Activated naive CD4-positive, alpha-beta T cell treated with anti-CD3 and anti-CD28 coated beads for 36 hours (primary cell): ENCODE measurements at regions of chr12 and their contacts with region 1.

Region 1: DNA sequence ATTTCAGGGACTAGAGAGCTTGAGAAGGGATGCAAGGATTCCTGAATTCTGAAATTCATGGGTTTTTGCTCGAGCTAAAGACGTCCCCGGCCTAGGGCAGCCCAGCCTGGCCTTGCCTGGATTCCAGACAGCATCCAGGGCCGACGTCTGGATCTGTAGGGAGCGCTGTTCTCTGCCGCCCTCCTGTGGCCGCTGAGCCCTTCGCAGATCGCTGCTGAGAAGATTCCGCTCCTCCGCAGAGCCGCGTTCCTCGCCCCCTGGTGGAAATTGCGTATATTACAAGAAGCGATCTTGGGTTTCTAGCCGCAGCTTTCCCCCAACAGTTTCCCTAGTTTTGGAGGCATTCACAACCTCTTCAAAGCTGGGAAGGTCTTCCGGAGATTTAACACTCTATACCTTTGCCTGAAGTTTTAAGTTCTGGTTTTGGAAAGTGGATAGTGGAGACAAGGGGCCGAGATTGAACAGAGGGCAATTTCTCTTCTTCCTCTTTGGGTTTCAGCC is 5.1 kb downstream of the CISTR start:
- DNase-seq: peak; percentile 94
- H3K4me3 Mint-ChIP-seq: no peak overlapping the region
- H3K27ac Mint-ChIP-seq: no peak overlapping the region
- H3K4me1 Mint-ChIP-seq: peaks cover 5% of the 10 kb centered on the region
- H3K27me3 Mint-ChIP-seq: peaks cover 20% of the 10 kb centered on the region

Region 2: DNA sequence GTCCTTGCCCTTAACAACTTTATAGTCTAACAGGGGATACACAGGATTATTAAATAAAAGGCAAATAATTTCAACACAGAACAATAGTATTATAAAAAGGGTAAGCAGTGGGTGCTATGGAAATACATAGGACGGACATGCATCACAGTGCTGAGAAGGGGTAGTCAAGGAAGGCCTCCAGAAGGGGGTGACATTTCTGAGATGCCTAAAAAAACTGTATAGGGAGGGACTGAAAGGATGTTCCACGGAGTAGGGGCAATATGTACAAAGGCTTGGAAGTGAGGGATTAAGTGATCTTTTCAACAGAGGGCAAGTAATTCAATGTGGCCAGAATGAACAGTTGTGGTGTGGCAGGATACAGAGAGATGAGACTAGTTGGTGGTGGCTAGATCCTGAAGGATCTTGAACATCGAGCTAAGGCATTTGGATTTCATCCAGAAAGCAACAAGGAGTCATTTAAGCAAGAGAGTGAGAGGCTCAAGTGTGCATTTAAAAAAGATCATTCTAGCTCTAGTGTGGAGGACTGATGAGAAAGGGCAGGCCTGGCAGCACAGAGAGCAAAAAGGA is 61.9 kb before region 1 on chr12:
- CTCF ChIA-PET with region 1: interaction called, 13 read pairs
- intact Hi-C with region 1: no loop called
- DNase-seq: no peak
- H3K4me3 Mint-ChIP-seq: no peak overlapping the region
- H3K27ac Mint-ChIP-seq: no peak overlapping the region
- H3K4me1 Mint-ChIP-seq: no peaks in the 10 kb centered on the region
- H3K27me3 Mint-ChIP-seq: no peaks in the 10 kb centered on the region

Region 3: DNA sequence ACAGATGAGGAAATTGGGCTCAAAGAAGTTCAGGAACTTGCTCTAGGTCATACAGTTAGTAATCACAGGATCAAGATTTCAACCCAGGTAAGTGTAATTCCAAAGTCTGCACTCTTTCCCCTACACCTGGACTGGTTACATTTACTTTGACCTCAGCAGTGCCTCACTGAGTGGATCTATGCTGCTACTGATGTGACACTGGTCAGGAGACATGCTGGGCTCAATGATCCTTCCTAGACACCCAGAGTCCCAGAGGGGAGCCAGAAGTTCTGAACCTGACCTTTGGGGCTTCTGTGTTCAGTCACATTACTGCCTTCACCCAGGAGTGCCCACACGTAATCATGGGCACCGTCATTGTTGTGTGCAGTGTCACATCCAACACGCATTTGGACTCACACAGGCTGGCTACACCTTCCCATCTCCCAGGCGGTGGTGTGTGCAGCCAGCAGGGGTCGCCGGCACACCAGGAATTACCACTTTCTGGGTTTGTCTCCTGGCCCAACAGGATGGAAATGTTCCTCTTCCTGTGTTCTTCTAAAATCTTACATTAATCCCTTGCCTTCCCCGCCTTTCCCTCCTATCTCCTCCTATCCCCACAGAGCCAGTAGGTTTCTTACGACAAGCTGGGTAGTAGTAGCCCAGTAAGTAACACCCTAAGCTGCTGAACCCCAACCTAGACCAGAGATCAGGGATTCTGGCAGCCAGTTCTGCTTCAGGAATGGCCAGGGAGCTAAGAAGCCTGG is 45.0 kb before region 1 on chr12:
- CTCF ChIA-PET with region 1: interaction called, 236 read pairs
- intact Hi-C with region 1: loop called (anchors 1 kb)
- DNase-seq: peak; percentile 86
- H3K4me3 Mint-ChIP-seq: no peak overlapping the region
- H3K27ac Mint-ChIP-seq: no peak overlapping the region
- H3K4me1 Mint-ChIP-seq: peaks cover 7% of the 10 kb centered on the region
- H3K27me3 Mint-ChIP-seq: peaks cover 74% of the 10 kb centered on the region

Region 4: DNA sequence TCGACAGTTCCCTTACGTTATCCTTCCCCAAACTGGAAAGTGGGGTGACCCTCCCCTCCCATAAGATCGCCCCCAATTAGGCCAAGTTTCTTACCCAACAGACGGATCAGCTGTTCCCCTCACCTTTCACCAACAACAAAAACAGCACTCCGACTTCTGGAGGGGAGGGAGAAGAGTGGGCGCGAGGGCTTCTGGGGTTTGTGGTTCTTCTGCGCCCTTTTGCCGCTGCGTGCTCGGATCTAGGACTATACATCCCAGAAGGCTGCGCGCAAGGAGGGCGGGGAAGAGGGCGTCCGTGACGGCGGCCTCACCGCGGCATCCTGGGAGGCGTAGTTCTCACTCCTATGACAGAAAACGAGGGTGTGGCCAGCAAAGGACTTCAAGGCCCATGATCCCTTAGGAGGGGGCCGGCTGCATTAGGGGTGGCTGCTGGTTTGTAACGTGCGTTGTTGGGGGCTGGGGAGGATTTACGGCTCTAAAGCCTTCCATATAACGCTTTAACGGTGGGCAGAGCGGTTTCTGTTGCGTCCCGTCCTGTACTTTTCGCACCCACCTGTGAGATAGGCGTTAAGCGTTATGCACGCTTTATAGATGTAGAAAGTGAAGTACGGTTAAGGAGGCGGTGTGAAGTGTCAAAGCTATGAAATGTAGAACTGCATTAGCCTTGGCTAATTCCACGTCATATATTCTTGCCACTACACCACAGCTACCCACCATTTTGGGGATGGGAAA is 19.2 kb before region 1 on chr12 and contains the start of gene CALCOCO1:
- CTCF ChIA-PET with region 1: interaction called, 231 read pairs
- intact Hi-C with region 1: loop called (anchors 1 kb)
- DNase-seq: peak; percentile 99
- H3K4me3 Mint-ChIP-seq: peak within 1 kb of the TSS; percentile 92
- H3K27ac Mint-ChIP-seq: peak within 1 kb of the TSS; percentile 87
- H3K4me1 Mint-ChIP-seq: peaks cover 16% of the 10 kb centered on the region
- H3K27me3 Mint-ChIP-seq: no peaks in the 10 kb centered on the region
- total RNA-seq, gene CALCOCO1: 8.1 to 8.3 TPM

Region 5: GRCh38 chr12:53764615-53765014 is 18.0 kb after region 1 on chr12:
- CTCF ChIA-PET with region 1: interaction called, 13 read pairs
- intact Hi-C with region 1: no loop called
- DNase-seq: no peak
- H3K4me3 Mint-ChIP-seq: no peak overlapping the region
- H3K27ac Mint-ChIP-seq: no peak overlapping the region
- H3K4me1 Mint-ChIP-seq: no peaks in the 10 kb centered on the region
- H3K27me3 Mint-ChIP-seq: peaks cover 44% of the 10 kb centered on the region

Region 6: GRCh38 chr12:53791735-53792326 is 45.2 kb after region 1 on chr12:
- CTCF ChIA-PET with region 1: no interaction called
- intact Hi-C with region 1: no loop called
- DNase-seq: peak; percentile 42
- H3K4me3 Mint-ChIP-seq: no peak overlapping the region
- H3K27ac Mint-ChIP-seq: no peak overlapping the region
- H3K4me1 Mint-ChIP-seq: no peaks in the 10 kb centered on the region
- H3K27me3 Mint-ChIP-seq: peaks cover 3% of the 10 kb centered on the region

Region 7: DNA sequence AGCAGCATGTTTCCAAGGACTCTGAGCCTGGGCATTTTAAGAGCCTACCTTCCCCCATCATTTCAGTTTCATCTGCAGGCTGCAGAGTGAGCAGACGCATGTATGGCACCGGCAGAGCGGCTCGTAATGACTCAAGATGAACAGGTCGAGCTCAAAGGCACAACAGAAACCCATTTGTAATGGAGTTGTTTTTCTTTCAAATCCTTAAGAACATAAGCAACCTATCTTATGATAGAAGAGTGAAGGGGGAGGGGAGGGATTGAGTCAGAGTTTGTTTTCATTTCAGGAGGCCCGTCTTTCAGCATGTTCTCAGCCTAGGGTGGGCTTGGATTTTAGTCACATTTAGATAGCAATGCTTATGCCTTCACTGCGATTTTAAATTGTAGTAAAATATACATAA is 60.1 kb after region 1 on chr12:
- CTCF ChIA-PET with region 1: no interaction called
- intact Hi-C with region 1: no loop called
- DNase-seq: no peak
- H3K4me3 Mint-ChIP-seq: no peak overlapping the region
- H3K27ac Mint-ChIP-seq: no peak overlapping the region
- H3K4me1 Mint-ChIP-seq: no peaks in the 10 kb centered on the region
- H3K27me3 Mint-ChIP-seq: peaks cover 24% of the 10 kb centered on the region

Region 8: GRCh38 chr12:53852061-53852460 is 105.4 kb after region 1 on chr12:
- CTCF ChIA-PET with region 1: no interaction called
- intact Hi-C with region 1: no loop called
- DNase-seq: no peak
- H3K4me3 Mint-ChIP-seq: no peak overlapping the region
- H3K27ac Mint-ChIP-seq: no peak overlapping the region
- H3K4me1 Mint-ChIP-seq: no peaks in the 10 kb centered on the region
- H3K27me3 Mint-ChIP-seq: peaks cover 25% of the 10 kb centered on the region

Region 9: DNA sequence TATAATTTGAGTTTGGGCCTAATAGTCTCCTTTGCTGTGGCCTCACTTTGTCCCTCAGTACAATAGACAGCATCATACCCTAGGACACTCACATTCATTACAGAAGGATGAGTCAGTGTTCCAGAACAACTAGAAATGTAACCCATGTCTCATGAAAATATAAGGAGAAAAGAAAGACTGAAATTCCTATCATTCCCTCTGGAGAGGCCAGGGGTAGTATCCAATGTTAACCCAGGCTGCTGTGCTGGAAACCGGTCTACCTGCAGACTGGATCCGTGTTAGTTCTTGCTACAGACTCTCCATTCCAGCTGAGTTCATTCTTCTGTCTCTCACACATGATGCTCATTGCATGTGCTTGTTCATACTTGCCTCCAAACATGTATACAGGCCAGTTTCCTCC is 116.2 kb after region 1 on chr12:
- CTCF ChIA-PET with region 1: no interaction called
- intact Hi-C with region 1: no loop called
- DNase-seq: no peak
- H3K4me3 Mint-ChIP-seq: no peak overlapping the region
- H3K27ac Mint-ChIP-seq: no peak overlapping the region
- H3K4me1 Mint-ChIP-seq: no peaks in the 10 kb centered on the region
- H3K27me3 Mint-ChIP-seq: peaks cover 12% of the 10 kb centered on the region